B cell (primary cell): ENCODE measurements at regions of chr10 and their contacts with region 1.

Region 1: DNA sequence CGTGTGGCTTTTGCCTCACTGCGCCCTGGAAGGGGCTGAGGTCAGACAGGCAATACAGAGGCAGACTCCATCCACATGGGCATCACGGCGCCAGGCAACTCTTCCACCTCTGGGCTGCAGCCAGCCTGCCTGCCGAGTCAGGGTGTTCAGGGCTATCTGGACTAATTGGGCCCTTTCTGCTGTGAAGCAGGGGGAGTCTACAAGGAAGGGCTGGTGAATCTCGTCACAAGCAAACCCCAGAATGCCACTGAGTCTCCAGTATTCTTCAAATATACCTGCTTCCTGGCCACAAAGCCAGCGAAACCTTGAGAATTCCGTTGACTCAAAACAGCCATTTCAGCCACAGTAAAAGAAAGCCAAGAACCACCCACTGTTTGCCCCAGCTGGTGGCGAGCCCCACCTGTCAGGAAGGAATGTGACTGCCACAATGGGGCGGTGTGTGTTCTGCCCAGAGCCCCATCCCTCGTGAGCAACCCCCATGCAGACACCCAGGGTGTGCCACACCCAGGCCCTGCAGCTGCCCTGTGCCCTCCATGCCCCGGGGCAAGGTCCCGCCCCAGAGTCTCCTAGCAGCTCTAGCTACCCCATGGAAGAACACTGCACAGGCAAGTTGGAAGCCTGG is 117.3 kb downstream of the FAM53B start:
- DNase-seq: peak; percentile 82
- ATAC-seq: peak; percentile 81
- H3K4me3 ChIP-seq: peak overlapping the region in 1 of 5 experiments; percentile 30
- H3K4me3 Mint-ChIP-seq: peak overlapping the region; percentile 62
- H3K27ac ChIP-seq: peak overlapping the region; percentile 83 to 97
- H3K27ac Mint-ChIP-seq: peak overlapping the region; percentile 99
- H3K4me1 ChIP-seq: peaks cover 100% of the 10 kb centered on the region in 2 donors
- H3K4me1 Mint-ChIP-seq: peaks cover 94% of the 10 kb centered on the region
- H3K27me3 ChIP-seq: no peaks in the 10 kb centered on the region
- H3K27me3 Mint-ChIP-seq: no peaks in the 10 kb centered on the region
- CTCF ChIP-seq: peak; percentile 16

Region 2: GRCh38 chr10:124565565-124566256 is 61.2 kb before region 1 on chr10:
- CTCF ChIA-PET with region 1: interaction called, 5 read pairs
- POLR2A ChIA-PET with region 1: interaction called, 13 read pairs
- intact Hi-C with region 1: no loop called
- DNase-seq: peak; percentile 49
- ATAC-seq: peak; percentile 45
- H3K4me3 ChIP-seq: no peak overlapping the region
- H3K4me3 Mint-ChIP-seq: no peak overlapping the region
- H3K27ac ChIP-seq: no peak overlapping the region
- H3K27ac Mint-ChIP-seq: no peak overlapping the region
- H3K4me1 ChIP-seq: peaks cover 35 to 40% of the 10 kb centered on the region in 2 donors
- H3K4me1 Mint-ChIP-seq: peaks cover 51% of the 10 kb centered on the region
- H3K27me3 ChIP-seq: no peaks in the 10 kb centered on the region
- H3K27me3 Mint-ChIP-seq: no peaks in the 10 kb centered on the region
- CTCF ChIP-seq: no peak

Region 3: GRCh38 chr10:124641282-124642087 is 14.6 kb after region 1 on chr10:
- CTCF ChIA-PET with region 1: interaction called, 10 read pairs
- POLR2A ChIA-PET with region 1: interaction called, 15 read pairs
- intact Hi-C with region 1: loop called (anchors 1 kb)
- DNase-seq: peak; percentile 81
- ATAC-seq: peak; percentile 76
- H3K4me3 ChIP-seq: peak overlapping the region in 4 of 5 experiments; percentile 18 to 37 (median 20)
- H3K4me3 Mint-ChIP-seq: peak overlapping the region; percentile 83
- H3K27ac ChIP-seq: peak overlapping the region; percentile 86 to 92
- H3K27ac Mint-ChIP-seq: peak overlapping the region; percentile 94
- H3K4me1 ChIP-seq: peaks cover 99 to 100% of the 10 kb centered on the region in 2 donors
- H3K4me1 Mint-ChIP-seq: peaks cover 99% of the 10 kb centered on the region
- H3K27me3 ChIP-seq: no peaks in the 10 kb centered on the region
- H3K27me3 Mint-ChIP-seq: no peaks in the 10 kb centered on the region
- CTCF ChIP-seq: no peak

Region 4: GRCh38 chr10:124647421-124648130 is 20.7 kb after region 1 on chr10:
- CTCF ChIA-PET with region 1: interaction called, 12 read pairs
- POLR2A ChIA-PET with region 1: interaction called, 4 read pairs
- intact Hi-C with region 1: no loop called
- DNase-seq: peak; percentile 80
- ATAC-seq: peak; percentile 78
- H3K4me3 ChIP-seq: peak overlapping the region in 4 of 5 experiments; percentile 15 to 45 (median 26)
- H3K4me3 Mint-ChIP-seq: peak overlapping the region; percentile 85
- H3K27ac ChIP-seq: peak overlapping the region; percentile 71 to 92
- H3K27ac Mint-ChIP-seq: peak overlapping the region; percentile 97
- H3K4me1 ChIP-seq: peaks cover 99 to 100% of the 10 kb centered on the region in 2 donors
- H3K4me1 Mint-ChIP-seq: peaks cover 99% of the 10 kb centered on the region
- H3K27me3 ChIP-seq: no peaks in the 10 kb centered on the region
- H3K27me3 Mint-ChIP-seq: no peaks in the 10 kb centered on the region
- CTCF ChIP-seq: peak; percentile 25

Region 5: GRCh38 chr10:124849111-124849773 is 222.4 kb after region 1 on chr10:
- CTCF ChIA-PET with region 1: no interaction called
- POLR2A ChIA-PET with region 1: no interaction called
- intact Hi-C with region 1: no loop called
- DNase-seq: no peak
- ATAC-seq: no peak
- H3K4me3 ChIP-seq: no peak overlapping the region
- H3K4me3 Mint-ChIP-seq: no peak overlapping the region
- H3K27ac ChIP-seq: no peak overlapping the region
- H3K27ac Mint-ChIP-seq: no peak overlapping the region
- H3K4me1 ChIP-seq: no peaks in the 10 kb centered on the region
- H3K4me1 Mint-ChIP-seq: no peaks in the 10 kb centered on the region
- H3K27me3 ChIP-seq: no peaks in the 10 kb centered on the region
- H3K27me3 Mint-ChIP-seq: peaks cover 4% of the 10 kb centered on the region
- CTCF ChIP-seq: no peak